ENCODE measurements at regions of chr2 and their contacts with region 1.

Region 1: GRCh38 chr2:174748948-174749347 is 15.3 kb downstream of the CHRNA1 start:
- DNase-seq: no peak
- ATAC-seq: peak; percentile 58
- H3K4me3 ChIP-seq: no peak overlapping the region
- H3K27ac ChIP-seq: no peak overlapping the region
- H3K4me1 ChIP-seq: peaks cover 24% of the 10 kb centered on the region
- H3K27me3 ChIP-seq: no peaks in the 10 kb centered on the region; a peak in 2 of 4 replicates
- CTCF ChIP-seq: peak; percentile 75 to 83 (median 78)
- EP300 ChIP-seq: no peak
- POLR2A ChIP-seq: no peak
- RAD21 ChIP-seq: peak; percentile 87

Region 2: GRCh38 chr2:174764280-174765255 is 15.6 kb after region 1 on chr2 and contains the start of gene CHRNA1:
- CTCF ChIA-PET with region 1: interaction called, 43 read pairs
- POLR2A ChIA-PET with region 1: interaction called, 4 read pairs
- RAD21 ChIA-PET with region 1: interaction called, 15 read pairs
- SMC1A ChIA-PET with region 1: interaction called, 9 read pairs
- in situ Hi-C with region 1: no loop called
- intact Hi-C with region 1: no loop called
- DNase-seq: no peak
- ATAC-seq: peak; percentile 78
- H3K4me3 ChIP-seq: no peak within 1 kb of the TSS
- H3K27ac ChIP-seq: no peak within 1 kb of the TSS
- H3K4me1 ChIP-seq: peaks cover 5% of the 10 kb centered on the region
- H3K27me3 ChIP-seq: no peaks in the 10 kb centered on the region
- CTCF ChIP-seq: no peak
- EP300 ChIP-seq: peak in 1 of 2 experiments; percentile 43; a peak in 1 of 4 replicates
- POLR2A ChIP-seq: no peak
- RAD21 ChIP-seq: no peak
- polyA plus RNA-seq, gene CHRNA1: not detected

Region 3: GRCh38 chr2:174771631-174772471 is 22.9 kb after region 1 on chr2:
- CTCF ChIA-PET with region 1: interaction called, 41 read pairs
- POLR2A ChIA-PET with region 1: no interaction called
- RAD21 ChIA-PET with region 1: interaction called, 46 read pairs
- SMC1A ChIA-PET with region 1: interaction called, 26 read pairs
- in situ Hi-C with region 1: no loop called
- intact Hi-C with region 1: no loop called
- DNase-seq: no peak
- ATAC-seq: peak; percentile 97
- H3K4me3 ChIP-seq: no peak overlapping the region
- H3K27ac ChIP-seq: no peak overlapping the region
- H3K4me1 ChIP-seq: no peaks in the 10 kb centered on the region
- H3K27me3 ChIP-seq: peaks cover 0 to 1% of the 10 kb centered on the region in 2 experiments; a peak in 1 of 4 replicates
- CTCF ChIP-seq: peak; percentile 50 to 72 (median 70)
- EP300 ChIP-seq: no peak
- POLR2A ChIP-seq: no peak
- RAD21 ChIP-seq: peak; percentile 67

Region 4: GRCh38 chr2:174778085-174778981 is 29.4 kb after region 1 on chr2:
- CTCF ChIA-PET with region 1: interaction called, 41 read pairs
- POLR2A ChIA-PET with region 1: no interaction called
- RAD21 ChIA-PET with region 1: interaction called, 46 read pairs
- SMC1A ChIA-PET with region 1: interaction called, 11 read pairs
- in situ Hi-C with region 1: no loop called
- intact Hi-C with region 1: no loop called
- DNase-seq: peak; percentile 50
- ATAC-seq: peak; percentile 90
- H3K4me3 ChIP-seq: no peak overlapping the region
- H3K27ac ChIP-seq: no peak overlapping the region
- H3K4me1 ChIP-seq: peaks cover 10% of the 10 kb centered on the region
- H3K27me3 ChIP-seq: no peaks in the 10 kb centered on the region; a peak in 2 of 4 replicates
- CTCF ChIP-seq: no peak
- EP300 ChIP-seq: peak; percentile 68 to 77; a peak in 2 of 4 replicates
- POLR2A ChIP-seq: no peak
- RAD21 ChIP-seq: no peak

Region 5: DNA sequence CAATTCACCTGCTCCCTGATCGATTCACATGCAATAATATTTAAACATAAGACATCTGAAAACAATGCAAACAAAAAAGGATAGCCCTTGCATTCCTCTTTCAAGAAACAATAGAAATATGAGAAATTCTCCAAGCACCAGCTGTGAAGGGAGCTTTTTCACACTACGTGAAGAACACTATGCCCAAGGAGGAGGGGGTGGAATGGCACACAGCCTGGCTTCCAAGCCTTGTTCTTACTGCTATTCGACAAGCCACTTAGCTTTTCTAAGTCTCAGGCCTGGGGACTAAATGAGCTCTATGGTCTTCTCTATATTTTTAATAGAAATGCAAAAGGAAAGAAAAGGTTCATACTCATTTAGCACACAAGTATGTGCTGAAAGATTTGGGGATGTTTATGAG is 107.5 kb after region 1 on chr2:
- CTCF ChIA-PET with region 1: no interaction called
- POLR2A ChIA-PET with region 1: no interaction called
- RAD21 ChIA-PET with region 1: no interaction called
- SMC1A ChIA-PET with region 1: no interaction called
- in situ Hi-C with region 1: no loop called
- intact Hi-C with region 1: no loop called
- DNase-seq: no peak
- ATAC-seq: no peak
- H3K4me3 ChIP-seq: no peak overlapping the region
- H3K27ac ChIP-seq: no peak overlapping the region
- H3K4me1 ChIP-seq: no peaks in the 10 kb centered on the region
- H3K27me3 ChIP-seq: no peaks in the 10 kb centered on the region
- CTCF ChIP-seq: no peak
- EP300 ChIP-seq: no peak
- POLR2A ChIP-seq: no peak
- RAD21 ChIP-seq: no peak

Region 6: DNA sequence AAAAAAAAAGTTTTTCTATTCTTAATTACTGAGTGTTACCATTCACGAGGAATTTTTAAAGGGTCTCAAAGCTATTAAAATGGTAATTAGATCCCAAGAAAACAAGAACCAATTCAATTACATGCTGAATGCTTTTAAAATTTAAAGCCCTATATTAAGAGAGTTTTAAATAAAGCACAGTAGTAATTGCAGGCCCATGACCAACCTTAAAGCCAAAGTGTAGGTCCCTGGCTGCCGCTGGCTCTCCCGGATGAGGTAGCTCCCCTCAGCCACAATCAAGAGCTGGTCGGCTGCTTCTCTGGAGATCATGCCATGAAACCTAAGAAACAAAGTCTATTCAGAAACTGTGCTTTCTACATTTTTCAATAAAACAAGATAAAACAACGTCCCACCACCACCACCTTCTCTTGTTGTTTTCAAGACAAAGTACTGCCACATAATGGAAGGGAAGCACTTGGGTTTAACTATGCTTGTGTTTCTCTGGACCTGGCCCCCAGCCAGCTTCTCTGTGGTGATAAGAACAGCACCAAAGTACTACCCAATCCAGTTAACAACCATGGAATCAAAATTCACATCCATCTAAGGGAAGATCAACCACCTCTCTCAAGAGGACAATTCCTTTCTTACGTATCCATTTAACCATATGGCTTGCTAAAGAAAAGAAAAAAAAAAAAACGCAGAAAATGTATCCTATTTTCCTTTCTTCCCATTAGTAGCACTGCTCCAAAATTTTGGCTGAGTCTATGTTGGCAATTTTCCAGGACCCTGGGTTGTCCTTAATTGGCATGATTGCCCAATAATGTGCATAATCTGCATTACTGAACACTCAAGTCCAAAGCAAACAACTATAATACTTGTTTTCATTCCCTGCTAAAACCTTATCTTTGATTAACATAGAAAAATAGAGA is 166.2 kb after region 1 on chr2:
- CTCF ChIA-PET with region 1: no interaction called
- POLR2A ChIA-PET with region 1: no interaction called
- RAD21 ChIA-PET with region 1: no interaction called
- SMC1A ChIA-PET with region 1: no interaction called
- in situ Hi-C with region 1: no loop called
- intact Hi-C with region 1: no loop called
- DNase-seq: no peak
- ATAC-seq: no peak
- H3K4me3 ChIP-seq: no peak overlapping the region
- H3K27ac ChIP-seq: no peak overlapping the region
- H3K4me1 ChIP-seq: no peaks in the 10 kb centered on the region
- H3K27me3 ChIP-seq: no peaks in the 10 kb centered on the region
- CTCF ChIP-seq: no peak
- EP300 ChIP-seq: no peak
- POLR2A ChIP-seq: no peak
- RAD21 ChIP-seq: no peak

Region 7: DNA sequence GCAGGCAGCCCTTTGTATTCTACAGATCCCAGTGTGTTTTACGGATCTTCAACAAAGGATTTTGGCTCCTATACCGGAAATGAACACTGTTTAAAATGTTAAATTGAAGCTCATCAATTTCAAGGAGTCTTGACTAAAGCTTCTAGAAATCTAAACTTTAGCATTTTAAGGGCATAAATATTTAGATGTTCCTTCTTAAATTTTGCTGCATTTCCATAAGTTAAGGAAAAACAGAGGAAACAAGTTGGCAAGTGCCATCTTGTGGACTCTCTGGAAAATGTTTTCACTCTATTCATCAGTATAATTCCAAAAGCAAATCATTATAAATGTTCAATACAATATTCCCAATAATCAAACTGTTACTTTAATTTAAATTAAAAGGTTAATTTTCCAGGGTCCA is 236.7 kb after region 1 on chr2:
- CTCF ChIA-PET with region 1: interaction called, 35 read pairs
- POLR2A ChIA-PET with region 1: no interaction called
- RAD21 ChIA-PET with region 1: interaction called, 24 read pairs
- SMC1A ChIA-PET with region 1: interaction called, 16 read pairs
- in situ Hi-C with region 1: no loop called
- intact Hi-C with region 1: loop called (anchors 2 kb)
- DNase-seq: no peak
- ATAC-seq: no peak
- H3K4me3 ChIP-seq: no peak overlapping the region
- H3K27ac ChIP-seq: no peak overlapping the region
- H3K4me1 ChIP-seq: no peaks in the 10 kb centered on the region
- H3K27me3 ChIP-seq: no peaks in the 10 kb centered on the region
- CTCF ChIP-seq: peak in 1 of 3 experiments; percentile 13; a peak in 2 of 6 replicates
- EP300 ChIP-seq: no peak
- POLR2A ChIP-seq: no peak
- RAD21 ChIP-seq: 0 out of 2 replicates have a peak, but pooled peaks have one; percentile 8

Measured in GM12878 (cell line).